ENCODE measurements at regions of chr14 and their contacts with region 1.

Region 1: GRCh38 chr14:73576391-73576790 is 7.4 kb downstream of the ACOT2 start:
- DNase-seq: no peak
- ATAC-seq: no peak
- H3K4me3 Mint-ChIP-seq: no peak overlapping the region
- H3K27ac Mint-ChIP-seq: no peak overlapping the region
- H3K4me1 Mint-ChIP-seq: no peaks in the 10 kb centered on the region
- H3K27me3 Mint-ChIP-seq: no peaks in the 10 kb centered on the region
- CTCF ChIP-seq: no peak

Region 2: DNA sequence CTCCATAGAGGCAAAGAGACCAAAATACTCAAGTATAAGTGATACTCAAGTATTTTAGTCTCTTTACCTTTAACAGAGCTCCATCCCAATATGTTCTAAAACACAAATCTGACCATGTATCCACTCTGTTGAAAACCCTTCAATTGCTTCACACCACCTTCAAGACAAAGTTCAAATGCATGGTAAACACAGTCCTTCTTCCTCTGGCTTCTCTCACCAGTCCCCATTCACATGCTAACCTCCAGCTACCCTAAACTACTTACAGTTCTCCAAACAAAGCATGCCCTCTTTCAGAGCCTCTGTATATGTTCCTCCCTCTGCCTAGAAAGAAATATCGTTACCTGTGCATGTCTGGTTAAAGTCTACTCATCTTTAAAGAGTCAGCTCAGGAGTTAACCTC is 218.2 kb before region 1 on chr14:
- CTCF ChIA-PET with region 1: no interaction called
- POLR2A ChIA-PET with region 1: interaction called, 18 read pairs
- DNase-seq: no peak
- ATAC-seq: peak; percentile 81
- H3K4me3 Mint-ChIP-seq: no peak overlapping the region
- H3K27ac Mint-ChIP-seq: 0 out of 2 replicates have a peak overlapping the region, but pooled peaks have one; percentile 17
- H3K4me1 Mint-ChIP-seq: peaks cover 15% of the 10 kb centered on the region
- H3K27me3 Mint-ChIP-seq: no peaks in the 10 kb centered on the region; the same call in 1 of the 2 replicates
- CTCF ChIP-seq: no peak

Region 3: DNA sequence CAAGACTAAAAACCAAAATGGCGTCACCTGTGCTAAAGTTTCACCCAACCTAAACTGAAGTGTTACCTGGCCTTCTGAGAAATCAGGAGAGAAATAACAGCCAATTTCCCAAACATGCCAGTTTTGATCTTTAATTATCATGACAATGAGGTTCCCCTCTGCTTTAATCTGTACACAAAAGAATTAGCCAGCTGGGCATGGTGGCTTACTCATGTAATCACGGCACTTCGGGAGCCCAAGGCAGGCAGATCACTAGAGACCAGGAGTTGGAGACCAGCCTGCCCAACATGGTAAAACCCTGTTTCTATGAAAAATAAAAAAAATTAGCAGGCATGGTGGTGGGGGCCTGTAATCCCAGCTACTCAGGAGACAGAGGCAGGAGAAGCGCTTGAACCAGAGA is 22.5 kb before region 1 on chr14:
- CTCF ChIA-PET with region 1: no interaction called
- POLR2A ChIA-PET with region 1: no interaction called
- DNase-seq: no peak
- ATAC-seq: no peak
- H3K4me3 Mint-ChIP-seq: no peak overlapping the region
- H3K27ac Mint-ChIP-seq: no peak overlapping the region
- H3K4me1 Mint-ChIP-seq: 0 out of 2 replicates have a peak, but pooled peaks cover 3% of the 10 kb centered on the region
- H3K27me3 Mint-ChIP-seq: no peaks in the 10 kb centered on the region
- CTCF ChIP-seq: no peak

Measured in WTC11 (cell line).